Lower leg skin (tissue), 4 donors: ENCODE measurements at regions of chr22 and their contacts with region 1.

Region 1: DNA sequence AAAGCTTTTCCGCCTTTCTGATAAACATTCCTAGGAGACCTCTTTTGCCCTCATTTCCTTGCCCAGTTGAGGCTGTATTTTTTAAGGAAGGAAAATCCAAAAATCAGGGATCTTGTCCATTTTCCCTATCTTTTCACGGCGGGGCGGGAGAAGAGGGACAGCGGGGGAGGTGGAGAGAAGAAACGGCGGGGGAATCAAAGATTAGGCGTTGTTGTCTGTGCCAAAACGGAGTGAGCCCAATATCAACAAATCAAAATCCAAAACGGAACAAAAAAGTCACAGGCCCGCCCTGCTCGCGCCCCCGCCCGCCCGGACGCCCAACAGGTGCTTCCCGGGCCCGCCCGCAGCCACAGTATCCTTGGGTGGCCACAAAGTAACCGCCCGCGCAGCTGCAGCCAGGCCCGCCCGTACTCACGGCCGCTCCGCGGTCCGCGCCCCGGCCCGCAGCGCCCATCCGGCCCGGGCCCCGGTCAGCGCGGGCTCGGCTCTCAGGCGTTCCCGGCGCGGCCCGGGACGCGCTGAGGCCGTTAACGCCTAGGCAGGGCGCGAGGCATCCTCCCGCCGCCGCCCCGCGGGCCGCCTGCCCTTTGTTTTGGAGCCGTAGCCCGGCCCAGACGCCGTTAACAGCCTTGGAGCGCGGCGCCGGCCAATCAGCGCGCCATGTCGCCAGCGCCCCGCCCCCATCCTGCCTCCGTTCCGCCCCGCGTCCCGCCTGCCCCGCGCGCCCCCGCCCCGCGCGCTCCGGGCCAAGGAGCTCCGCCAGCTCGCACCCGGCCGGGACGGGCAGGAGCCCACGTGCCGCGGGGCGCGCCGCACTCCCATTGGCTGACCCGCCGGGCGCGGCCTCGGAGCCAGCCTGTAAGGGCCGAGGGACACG is at the start of gene YPEL1:
- DNase-seq: peak; percentile 93 to 98
- H3K4me3 ChIP-seq: peak within 1 kb of the TSS; percentile 25
- CTCF ChIP-seq: no peak
- POLR2A ChIP-seq: peak in 1 of 2 donors; percentile 31
- total RNA-seq, gene YPEL1: 1.9 to 5.4 (median 2.8) TPM

Region 2: GRCh38 chr22:21796867-21797266 is 61.4 kb after region 1 on chr22:
- intact Hi-C with region 1: no loop called
- DNase-seq: peak in 1 of 2 donors; percentile 9
- H3K4me3 ChIP-seq: no peak overlapping the region
- CTCF ChIP-seq: no peak
- POLR2A ChIP-seq: no peak

Region 3: GRCh38 chr22:21938071-21938822 is 202.8 kb after region 1 on chr22:
- intact Hi-C with region 1: loop called (anchors 10 kb)
- DNase-seq: peak; percentile 90 to 99
- H3K4me3 ChIP-seq: peak overlapping the region; percentile 83
- CTCF ChIP-seq: peak in 1 of 3 donors; percentile 87
- POLR2A ChIP-seq: no peak